Caco-2 (cell line): ENCODE measurements at regions of chr3 and their contacts with region 1.

Region 1: DNA sequence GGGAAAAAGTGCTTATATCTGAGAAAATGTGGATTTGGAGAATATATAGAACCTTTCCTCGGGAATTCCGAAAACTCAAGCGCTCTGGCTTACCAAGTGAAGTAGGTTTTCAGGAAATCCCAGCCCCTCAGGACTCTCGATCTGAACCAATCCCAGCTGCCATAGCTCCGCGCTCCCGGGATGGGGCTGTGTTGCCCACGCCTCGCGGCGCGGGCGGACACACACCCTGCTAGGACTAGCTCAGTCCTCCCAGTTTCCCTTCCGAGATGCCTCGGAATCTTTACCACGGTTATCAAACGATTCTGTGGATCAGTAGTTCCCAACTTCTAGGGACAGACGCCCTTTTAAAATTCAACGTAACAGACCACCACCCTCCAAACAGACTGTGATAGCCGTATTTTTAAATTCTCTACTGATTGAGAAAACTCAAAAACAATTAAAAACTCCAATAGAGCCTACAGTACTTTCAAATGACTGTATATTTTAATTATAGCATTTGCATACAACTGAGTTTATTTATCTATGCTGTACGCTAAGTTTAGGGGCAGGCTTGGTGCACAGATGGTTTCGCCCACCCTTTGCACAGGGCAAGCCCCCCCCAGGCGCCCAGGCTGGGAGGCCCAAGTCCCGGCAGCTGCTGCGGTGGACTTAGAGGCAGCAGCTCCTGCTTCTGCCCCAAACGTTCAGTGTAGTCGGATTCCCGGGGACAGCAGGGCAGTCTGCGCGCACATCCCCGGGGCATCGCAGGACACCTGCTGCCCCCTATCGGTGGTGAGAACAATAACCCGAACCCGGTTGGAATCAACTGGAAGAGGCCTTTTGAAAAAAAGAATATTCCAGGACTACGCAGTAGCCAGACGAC is 52.3 kb downstream of the CCDC54 start:
- DNase-seq: peak; percentile 39 to 57
- H3K4me3 ChIP-seq: no peak overlapping the region
- H3K4me3 Mint-ChIP-seq: peak overlapping the region; percentile 24
- H3K27ac Mint-ChIP-seq: no peak overlapping the region
- H3K4me1 ChIP-seq: no peaks in the 10 kb centered on the region
- H3K4me1 Mint-ChIP-seq: no peaks in the 10 kb centered on the region
- H3K27me3 ChIP-seq: no peaks in the 10 kb centered on the region
- H3K27me3 Mint-ChIP-seq: peaks cover 8% of the 10 kb centered on the region
- CTCF ChIP-seq: peak; percentile 47 to 58

Region 2: GRCh38 chr3:107450254-107450893 is 20.8 kb after region 1 on chr3:
- CTCF ChIA-PET with region 1: no interaction called
- POLR2A ChIA-PET with region 1: no interaction called
- intact Hi-C with region 1: no loop called
- DNase-seq: no peak
- H3K4me3 ChIP-seq: no peak overlapping the region
- H3K4me3 Mint-ChIP-seq: no peak overlapping the region
- H3K27ac Mint-ChIP-seq: no peak overlapping the region
- H3K4me1 ChIP-seq: no peaks in the 10 kb centered on the region
- H3K4me1 Mint-ChIP-seq: no peaks in the 10 kb centered on the region
- H3K27me3 ChIP-seq: no peaks in the 10 kb centered on the region
- H3K27me3 Mint-ChIP-seq: peaks cover 3% of the 10 kb centered on the region
- CTCF ChIP-seq: no peak

Region 3: GRCh38 chr3:107496855-107497254 is 67.3 kb after region 1 on chr3:
- CTCF ChIA-PET with region 1: no interaction called
- POLR2A ChIA-PET with region 1: no interaction called
- intact Hi-C with region 1: no loop called
- DNase-seq: no peak
- H3K4me3 ChIP-seq: no peak overlapping the region
- H3K4me3 Mint-ChIP-seq: no peak overlapping the region
- H3K27ac Mint-ChIP-seq: no peak overlapping the region
- H3K4me1 ChIP-seq: no peaks in the 10 kb centered on the region
- H3K4me1 Mint-ChIP-seq: no peaks in the 10 kb centered on the region
- H3K27me3 ChIP-seq: no peaks in the 10 kb centered on the region
- H3K27me3 Mint-ChIP-seq: peaks cover 2% of the 10 kb centered on the region
- CTCF ChIP-seq: no peak

Region 4: DNA sequence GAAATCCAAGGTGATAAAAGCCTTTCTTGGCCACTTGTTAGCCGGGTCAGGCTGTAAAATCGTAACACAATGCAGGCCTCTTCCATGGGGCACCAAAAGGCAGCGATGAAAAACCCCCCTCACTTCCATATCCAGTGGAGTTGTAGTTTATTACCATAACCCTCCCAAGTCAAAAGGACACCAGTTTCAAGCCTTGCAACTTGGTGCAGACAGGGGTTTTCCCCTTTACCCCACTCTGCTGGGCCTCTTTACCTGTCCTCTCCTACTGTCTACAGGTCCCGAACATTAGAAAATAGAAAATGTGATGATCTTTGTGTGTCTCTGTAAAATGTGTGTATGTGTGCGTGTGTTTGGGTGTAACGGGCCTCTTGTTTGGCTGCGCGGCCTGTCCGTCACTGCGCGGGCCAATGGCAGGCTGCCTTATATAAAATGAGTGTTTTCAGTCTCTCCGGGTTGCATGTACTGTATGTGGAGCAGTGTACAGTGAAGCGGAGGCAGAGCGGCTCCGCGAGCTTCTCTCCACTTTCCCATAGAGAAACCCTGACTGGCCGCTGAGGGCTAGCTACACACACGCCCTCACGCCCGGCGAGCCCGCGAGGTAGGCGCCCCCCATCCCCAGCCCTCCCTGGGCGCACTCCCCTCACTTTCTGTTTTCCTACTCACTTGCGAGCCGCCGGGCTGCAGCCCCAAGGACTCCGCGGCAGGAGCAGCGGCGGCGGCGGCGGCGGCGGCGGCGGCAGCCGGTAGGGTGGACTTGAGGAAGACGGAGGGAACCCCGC is 93.1 kb after region 1 on chr3 and contains the start of gene BBX:
- CTCF ChIA-PET with region 1: no interaction called
- POLR2A ChIA-PET with region 1: no interaction called
- intact Hi-C with region 1: loop called (anchors 5 kb)
- DNase-seq: peak; percentile 92 to 93
- H3K4me3 ChIP-seq: peak within 1 kb of the TSS; percentile 77
- H3K4me3 Mint-ChIP-seq: peak within 1 kb of the TSS; percentile 82
- H3K27ac Mint-ChIP-seq: no peak within 1 kb of the TSS
- H3K4me1 ChIP-seq: no peaks in the 10 kb centered on the region
- H3K4me1 Mint-ChIP-seq: peaks cover 4% of the 10 kb centered on the region
- H3K27me3 ChIP-seq: no peaks in the 10 kb centered on the region; the same call in 1 of the 2 replicates
- H3K27me3 Mint-ChIP-seq: peaks cover 19% of the 10 kb centered on the region
- CTCF ChIP-seq: no peak
- total RNA-seq, gene BBX: 2.6 TPM in 2 replicates